ENCODE measurements at regions of chr14 and their contacts with region 1.

Region 1: DNA sequence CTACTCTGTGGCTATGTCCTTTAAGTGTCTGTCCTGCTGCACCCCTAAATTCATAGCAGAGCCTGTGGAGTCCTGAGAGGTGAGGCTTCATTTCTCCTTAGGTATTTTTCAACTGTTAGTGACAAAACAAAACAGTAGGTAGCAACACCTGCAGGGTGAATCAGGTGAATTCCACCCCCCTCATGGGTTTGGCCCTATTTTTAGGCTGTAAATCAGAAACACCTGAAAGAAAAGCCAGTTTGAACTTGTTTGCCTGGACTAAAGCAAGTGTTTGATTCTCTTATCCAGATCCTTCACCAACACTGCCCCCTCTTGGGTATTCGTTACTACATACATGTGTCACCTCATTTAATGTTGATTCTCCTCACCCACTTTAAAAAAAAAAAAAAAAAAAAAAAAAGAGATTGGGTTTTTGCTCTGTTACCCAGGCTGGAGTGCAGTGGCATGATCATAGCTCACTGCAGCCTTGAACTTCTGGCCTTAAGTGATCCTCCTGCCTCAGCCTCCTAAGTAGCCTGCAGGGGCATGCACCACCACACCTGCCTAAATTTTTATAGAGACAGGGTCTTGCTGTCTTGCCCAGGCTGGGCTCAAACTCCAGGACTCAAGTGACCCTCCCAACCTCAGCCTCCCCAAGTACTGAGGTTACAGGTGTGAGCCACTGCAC is 10.3 kb downstream of the TBPL2 start:
- DNase-seq: peak; percentile 32
- H3K4me3 Mint-ChIP-seq: no peak overlapping the region
- H3K27ac Mint-ChIP-seq: no peak overlapping the region
- H3K4me1 Mint-ChIP-seq: peaks cover 21% of the 10 kb centered on the region
- H3K27me3 Mint-ChIP-seq: peaks cover 3% of the 10 kb centered on the region

Region 2: DNA sequence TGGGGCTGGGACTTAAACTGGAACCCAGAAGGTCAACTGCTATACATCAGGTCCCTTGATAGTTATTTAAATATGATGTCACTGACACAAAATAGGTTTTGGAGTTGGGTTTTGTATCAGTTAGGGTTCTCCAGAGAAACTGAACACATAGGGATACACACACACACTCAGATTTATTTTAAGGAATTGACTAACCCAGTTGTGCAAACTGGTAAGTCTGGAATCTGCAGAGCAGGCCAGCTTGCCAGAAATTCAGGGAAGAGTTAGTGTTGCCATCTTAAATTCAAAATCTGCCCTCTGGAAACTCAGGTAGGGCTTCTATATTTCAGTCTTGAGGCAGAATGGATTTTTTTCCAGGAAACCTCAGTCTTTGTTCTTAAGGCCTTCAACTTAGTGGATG is 341.8 kb before region 1 on chr14:
- intact Hi-C with region 1: loop called (anchors 2 kb)
- DNase-seq: no peak
- H3K4me3 Mint-ChIP-seq: no peak overlapping the region
- H3K27ac Mint-ChIP-seq: no peak overlapping the region
- H3K4me1 Mint-ChIP-seq: peaks cover 15% of the 10 kb centered on the region
- H3K27me3 Mint-ChIP-seq: peaks cover 8% of the 10 kb centered on the region

Region 3: DNA sequence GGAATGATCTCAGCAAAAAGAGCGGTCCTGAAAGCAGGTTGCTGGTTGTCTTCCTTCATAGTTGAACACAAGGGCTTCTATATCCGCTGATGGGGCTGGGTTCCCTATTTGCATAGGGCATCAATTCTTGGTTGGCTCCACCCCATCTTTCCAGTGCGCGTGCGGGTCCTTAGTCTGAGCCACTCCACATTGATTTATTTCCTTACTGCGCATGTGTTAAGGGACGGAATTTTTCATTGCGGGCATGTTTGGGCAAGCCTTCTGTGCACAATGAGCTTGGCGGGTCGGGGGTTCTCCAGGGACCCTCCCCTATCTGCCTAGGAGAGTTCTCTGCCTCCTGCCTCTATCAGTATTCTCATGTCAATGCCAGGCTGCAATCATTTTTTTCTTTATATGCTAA is 217.5 kb before region 1 on chr14:
- intact Hi-C with region 1: loop called (anchors 1 kb)
- DNase-seq: no peak
- H3K4me3 Mint-ChIP-seq: no peak overlapping the region
- H3K27ac Mint-ChIP-seq: no peak overlapping the region
- H3K4me1 Mint-ChIP-seq: no peaks in the 10 kb centered on the region
- H3K27me3 Mint-ChIP-seq: peaks cover 9% of the 10 kb centered on the region

Region 4: GRCh38 chr14:55245657-55246268 is 184.4 kb before region 1 on chr14:
- intact Hi-C with region 1: loop called (anchors 1 kb)
- DNase-seq: no peak
- H3K4me3 Mint-ChIP-seq: no peak overlapping the region
- H3K27ac Mint-ChIP-seq: no peak overlapping the region
- H3K4me1 Mint-ChIP-seq: no peaks in the 10 kb centered on the region
- H3K27me3 Mint-ChIP-seq: peaks cover 40% of the 10 kb centered on the region

Region 5: DNA sequence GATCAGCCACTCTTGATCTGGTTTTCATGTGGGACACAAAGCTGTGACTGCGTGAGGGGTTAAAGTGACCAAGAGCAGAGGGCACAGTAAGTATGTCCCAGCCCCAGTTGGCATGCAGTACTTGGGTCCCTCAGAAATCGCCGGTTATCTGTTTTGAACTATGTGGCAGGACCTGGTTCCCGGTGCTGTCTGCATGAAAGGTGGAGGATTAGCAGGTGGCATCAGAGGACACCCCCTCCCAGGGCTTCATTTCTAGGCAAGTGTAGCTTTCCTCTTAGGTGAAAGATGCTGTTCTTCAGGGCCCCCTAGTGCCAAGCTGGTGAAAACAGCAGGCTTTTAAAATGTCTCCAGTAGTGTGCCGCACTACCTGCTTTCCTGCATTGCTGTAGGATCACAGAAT is 75.7 kb before region 1 on chr14:
- intact Hi-C with region 1: loop called (anchors 1 kb)
- DNase-seq: peak; percentile 45
- H3K4me3 Mint-ChIP-seq: peak overlapping the region; percentile 71
- H3K27ac Mint-ChIP-seq: peak overlapping the region; percentile 93
- H3K4me1 Mint-ChIP-seq: peaks cover 29% of the 10 kb centered on the region
- H3K27me3 Mint-ChIP-seq: no peaks in the 10 kb centered on the region

Region 6: DNA sequence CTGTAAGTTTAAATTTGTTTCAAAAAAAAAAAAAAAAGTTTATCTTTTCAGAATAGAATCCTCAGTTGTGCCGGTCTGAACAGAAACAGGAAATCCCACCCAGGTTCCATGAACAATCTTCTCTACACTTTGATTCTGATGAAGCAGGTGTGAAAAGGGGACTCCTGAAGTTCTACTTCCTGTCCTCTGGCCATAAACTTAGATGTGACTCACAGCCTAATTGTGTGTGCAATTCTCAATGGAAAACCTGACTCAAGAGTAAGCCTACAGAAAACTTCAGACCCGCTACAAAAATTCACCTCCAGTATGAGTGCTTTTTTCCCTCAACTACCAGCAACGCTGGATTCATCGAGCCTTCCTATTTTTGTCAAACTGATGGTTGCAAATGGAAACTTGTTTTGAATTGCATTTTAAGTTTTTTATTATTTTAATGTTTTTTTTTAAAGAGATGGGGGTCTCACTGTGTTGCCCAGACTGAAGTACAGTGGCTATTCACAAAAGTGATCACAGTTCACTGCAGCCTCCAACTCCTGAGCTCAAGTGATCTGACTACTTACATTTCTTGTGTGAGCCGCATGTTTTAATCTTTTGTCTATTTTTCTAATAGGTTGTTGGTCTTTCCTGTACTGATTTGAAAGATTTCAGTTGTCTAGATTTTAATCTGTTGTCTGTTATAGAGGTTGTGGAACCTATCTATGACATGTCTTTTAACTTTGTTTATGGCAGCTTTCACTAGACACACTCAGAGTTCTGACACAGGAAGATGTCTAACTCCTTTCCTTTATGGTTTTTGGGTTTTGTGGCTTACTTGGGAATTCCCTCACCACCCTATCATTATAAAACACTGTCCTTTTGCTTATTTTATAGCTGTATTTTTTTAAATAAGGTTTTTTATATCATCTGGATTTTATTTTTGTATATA is 56.1 kb before region 1 on chr14:
- intact Hi-C with region 1: no loop called
- DNase-seq: peak; percentile 35
- H3K4me3 Mint-ChIP-seq: peak overlapping the region; percentile 64
- H3K27ac Mint-ChIP-seq: peak overlapping the region; percentile 99
- H3K4me1 Mint-ChIP-seq: peaks cover 57% of the 10 kb centered on the region
- H3K27me3 Mint-ChIP-seq: no peaks in the 10 kb centered on the region

Region 7: DNA sequence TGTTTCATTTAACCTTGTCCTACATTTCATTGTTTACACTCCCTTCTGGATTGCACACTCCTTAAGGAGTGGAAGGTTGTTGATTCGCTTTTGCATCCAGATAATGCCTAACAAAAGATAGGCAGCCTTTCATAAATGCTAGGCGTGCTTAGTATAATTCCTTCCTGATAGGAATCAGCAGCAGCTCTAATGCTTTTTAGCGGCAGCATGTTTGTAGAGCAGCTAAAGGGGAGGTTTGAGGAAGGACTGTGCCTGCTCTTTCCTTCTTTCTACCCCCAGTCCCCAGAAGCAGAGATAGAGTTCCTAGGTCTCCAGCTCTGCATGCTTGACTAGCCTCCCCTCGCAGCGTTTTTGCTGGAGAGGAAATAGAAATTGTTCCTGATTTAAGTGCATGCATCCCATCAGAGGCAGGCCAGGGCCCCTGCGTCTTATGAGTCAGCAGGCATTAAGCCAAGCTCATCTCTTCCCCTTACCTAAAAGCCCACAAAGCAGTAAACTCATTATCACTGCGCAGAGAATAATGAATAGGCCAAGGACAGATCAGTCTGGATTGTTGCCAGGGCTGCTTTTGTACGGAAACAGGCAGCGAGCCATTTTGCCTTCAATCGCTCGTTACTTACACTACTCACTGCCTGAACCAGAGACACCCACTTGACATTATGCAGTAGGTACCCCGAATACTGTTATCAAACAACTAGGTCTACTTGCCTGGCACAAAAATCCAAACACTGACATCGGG is 24.3 kb after region 1 on chr14:
- intact Hi-C with region 1: no loop called
- DNase-seq: no peak
- H3K4me3 Mint-ChIP-seq: no peak overlapping the region
- H3K27ac Mint-ChIP-seq: no peak overlapping the region
- H3K4me1 Mint-ChIP-seq: peaks cover 8% of the 10 kb centered on the region
- H3K27me3 Mint-ChIP-seq: no peaks in the 10 kb centered on the region

Measured in activated T-helper 1 cell treated with anti-CD3 and anti-CD28 coated beads, Interleukin-12 subunit alpha, Interleukin-12 subunit beta, Interleukin-2, Interleukin-4 antibody, amounts not matched to agents 30 ng/mL and 10 ng/mL and 1 ng/mL, durations not matched to agents 14 hours and 24 hours and 36 hours (primary cell).